Esophagus muscularis mucosa (tissue), 4 donors: ENCODE measurements at regions of chr11 and their contacts with region 1.

Region 1: DNA sequence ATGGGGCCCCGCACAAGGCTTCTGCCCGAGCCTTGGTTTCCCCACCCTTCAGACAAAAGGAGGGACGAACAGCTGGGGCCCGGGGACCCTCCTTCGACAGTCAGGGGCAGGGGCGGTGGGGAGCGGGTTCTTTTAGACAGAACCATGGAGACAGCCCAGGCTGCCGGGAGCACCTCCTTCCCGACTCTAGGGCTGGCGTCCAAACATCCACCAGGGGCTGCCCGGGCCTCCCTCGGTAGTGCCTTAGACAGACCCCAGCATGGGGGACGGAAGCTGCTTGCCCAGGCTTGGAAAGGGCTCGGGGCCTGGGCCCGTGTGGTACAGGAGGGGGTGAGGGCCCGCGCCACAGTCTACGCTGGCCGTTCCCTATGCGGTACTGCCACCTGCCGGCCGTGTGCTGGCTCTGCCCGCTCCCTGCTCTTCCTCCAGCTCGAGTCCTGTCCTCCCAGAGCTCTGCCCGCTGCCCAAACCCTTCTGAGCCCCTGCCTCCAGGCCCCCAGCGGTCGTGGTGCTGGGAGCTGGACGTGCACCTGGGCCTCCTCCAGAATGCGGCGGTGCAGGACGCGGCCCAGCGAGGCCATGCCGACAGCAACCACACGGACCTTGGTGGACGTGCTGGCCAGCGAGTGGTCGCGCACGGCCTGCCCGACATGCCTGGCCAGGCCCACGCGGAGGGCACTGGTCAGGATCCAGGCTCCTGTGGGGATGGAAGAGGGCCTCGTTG is 20.1 kb downstream of the TSSC4 start:
- DNase-seq: no peak
- H3K4me3 ChIP-seq: peak overlapping the region in 2 of 4 donors; percentile 15 to 29
- H3K27ac ChIP-seq: no peak overlapping the region
- H3K4me1 ChIP-seq: peaks cover 5 to 19% (median 15%) of the 10 kb centered on the region in 4 donors
- H3K27me3 ChIP-seq: peaks cover 0 to 33% (median 0%) of the 10 kb centered on the region in 4 donors
- CTCF ChIP-seq: peak; percentile 90 to 95 (median 92)
- EP300 ChIP-seq: no peak
- POLR2A ChIP-seq: no peak

Region 2: GRCh38 chr11:2196970-2197770 is 223.5 kb before region 1 on chr11:
- intact Hi-C with region 1: loop called (anchors 1 kb)
- DNase-seq: peak; percentile 94
- H3K4me3 ChIP-seq: no peak overlapping the region
- H3K27ac ChIP-seq: no peak overlapping the region
- H3K4me1 ChIP-seq: peaks cover 0 to 4% (median 0%) of the 10 kb centered on the region in 4 donors
- H3K27me3 ChIP-seq: peaks cover 0 to 28% (median 0%) of the 10 kb centered on the region in 4 donors
- CTCF ChIP-seq: peak; percentile 76 to 92 (median 88)
- EP300 ChIP-seq: no peak
- POLR2A ChIP-seq: no peak

Region 3: DNA sequence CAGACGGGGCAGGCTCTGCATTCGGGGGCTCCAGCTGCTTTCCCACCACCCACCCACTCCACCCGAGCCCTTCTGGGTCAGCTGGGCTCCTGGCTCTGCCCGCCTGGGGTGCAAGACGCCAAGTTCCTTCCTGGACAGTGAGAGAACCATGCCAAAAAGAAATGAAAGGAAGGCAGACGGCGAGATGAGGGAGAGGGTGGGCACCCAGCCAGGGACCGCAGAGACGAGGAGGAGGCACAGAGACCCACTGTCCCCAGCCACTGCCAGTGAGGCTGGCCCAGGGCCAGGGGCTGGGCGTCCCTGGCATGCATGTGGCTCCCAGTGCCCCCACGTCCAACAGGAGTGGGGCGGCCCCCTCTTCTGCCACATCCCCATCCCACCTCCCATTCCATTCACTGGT is 54.4 kb before region 1 on chr11:
- intact Hi-C with region 1: loop called (anchors 10 kb)
- DNase-seq: no peak
- H3K4me3 ChIP-seq: no peak overlapping the region
- H3K27ac ChIP-seq: no peak overlapping the region
- H3K4me1 ChIP-seq: peaks cover 6 to 15% (median 12%) of the 10 kb centered on the region in 4 donors
- H3K27me3 ChIP-seq: no peaks in the 10 kb centered on the region
- CTCF ChIP-seq: no peak
- EP300 ChIP-seq: no peak
- POLR2A ChIP-seq: no peak

Region 4: DNA sequence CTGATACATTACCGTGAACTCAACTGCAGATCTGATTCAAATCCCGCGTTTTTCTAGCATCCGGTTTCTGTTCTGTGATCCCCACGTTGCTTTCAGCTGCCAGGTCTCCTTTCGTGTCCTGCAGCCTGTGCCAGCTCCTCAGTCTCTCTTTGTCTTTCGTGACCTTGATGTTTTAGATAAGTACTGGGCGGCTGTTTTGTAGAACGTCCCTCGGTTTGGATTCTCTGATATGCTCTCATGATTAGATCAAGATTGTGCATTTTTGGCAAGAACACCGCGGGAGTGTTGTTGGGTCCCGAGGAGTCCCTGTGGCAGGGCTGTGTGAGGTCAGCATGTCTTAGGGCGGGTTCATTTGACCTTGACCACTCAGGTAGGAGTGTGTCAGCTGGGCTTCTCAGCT is 62.8 kb after region 1 on chr11:
- intact Hi-C with region 1: no loop called
- DNase-seq: no peak
- H3K4me3 ChIP-seq: no peak overlapping the region
- H3K27ac ChIP-seq: no peak overlapping the region
- H3K4me1 ChIP-seq: peaks cover 0 to 3% (median 0%) of the 10 kb centered on the region in 4 donors
- H3K27me3 ChIP-seq: peaks cover 0 to 51% (median 0%) of the 10 kb centered on the region in 4 donors
- CTCF ChIP-seq: no peak
- EP300 ChIP-seq: no peak
- POLR2A ChIP-seq: no peak

Region 5: GRCh38 chr11:2586087-2586792 is 165.6 kb after region 1 on chr11:
- intact Hi-C with region 1: no loop called
- DNase-seq: peak; percentile 84
- H3K4me3 ChIP-seq: no peak overlapping the region
- H3K27ac ChIP-seq: no peak overlapping the region
- H3K4me1 ChIP-seq: peaks cover 0 to 5% (median 0%) of the 10 kb centered on the region in 4 donors
- H3K27me3 ChIP-seq: no peaks in the 10 kb centered on the region
- CTCF ChIP-seq: no peak
- EP300 ChIP-seq: no peak
- POLR2A ChIP-seq: no peak